A549 (cell line): ENCODE measurements at regions of chr12 and their contacts with region 1.

Region 1: DNA sequence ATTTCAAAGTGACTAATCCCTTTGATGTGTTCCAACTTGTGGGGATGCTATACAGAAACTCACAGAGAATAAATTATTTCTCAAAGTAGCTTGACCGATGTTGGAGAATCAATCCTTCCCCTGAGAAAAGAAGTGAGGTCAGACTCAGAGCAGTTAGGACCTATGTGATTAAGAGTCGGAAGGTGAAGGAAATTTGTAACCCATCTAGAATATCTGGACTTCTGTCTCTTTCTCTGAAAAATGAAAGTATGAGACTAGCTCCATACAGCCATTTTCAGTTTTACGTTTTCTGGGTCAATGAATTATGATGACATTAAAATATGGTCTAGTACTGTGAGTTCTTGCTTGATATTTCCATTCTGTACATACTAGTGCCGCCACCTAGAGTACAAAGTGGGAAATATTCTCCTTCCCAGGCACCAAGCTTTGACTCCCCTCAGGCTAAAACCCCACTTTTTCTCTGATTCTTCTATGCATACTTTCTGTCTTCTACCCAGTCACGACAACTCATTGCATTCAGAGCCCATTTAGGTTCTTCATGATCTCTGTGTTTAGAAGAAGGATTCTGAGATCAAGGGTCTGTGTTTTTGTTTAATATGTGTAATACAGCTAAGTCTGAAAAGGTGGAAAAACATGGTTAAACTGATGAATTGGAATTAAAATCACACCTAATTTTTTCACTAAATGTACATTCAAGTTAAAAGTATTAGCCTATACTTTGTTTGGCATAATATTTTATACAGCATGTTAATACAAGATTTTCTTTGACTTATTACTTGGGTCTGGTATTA is 6.9 kb upstream of the NTS start:
- DNase-seq: peak; percentile 51 to 70
- ATAC-seq: peak; percentile 64 to 95; a peak in 5 of 6 replicates
- H3K4me3 ChIP-seq: no peak overlapping the region
- H3K27ac ChIP-seq: peak overlapping the region in 1 of 2 experiments; percentile 18; a peak in 1 of 6 replicates
- H3K4me1 ChIP-seq: no peaks in the 10 kb centered on the region
- CTCF ChIP-seq: peak; percentile 82
- EP300 ChIP-seq: no peak
- POLR2A ChIP-seq: no peak
- RAD21 ChIP-seq: peak; percentile 82 to 87

Region 2: DNA sequence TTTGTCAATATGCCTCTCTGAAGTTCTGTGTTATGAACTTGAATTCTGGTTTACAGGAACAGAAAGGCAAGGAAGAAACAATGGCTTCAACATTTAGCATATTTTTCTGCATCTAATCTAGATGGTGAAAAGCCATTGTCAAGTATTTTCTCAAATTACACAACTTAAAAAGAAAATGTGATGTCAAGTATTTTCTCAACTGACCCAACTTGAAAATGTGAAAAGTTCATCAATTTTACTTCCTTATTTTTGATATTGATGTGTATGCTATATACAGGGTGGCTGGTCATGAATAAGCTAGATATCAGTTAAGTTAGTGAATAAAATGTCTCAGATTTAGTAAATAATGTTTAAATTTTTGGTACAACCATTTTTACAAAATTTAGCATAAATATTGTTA is 390.4 kb before region 1 on chr12:
- CTCF ChIA-PET with region 1: interaction called, 16 read pairs
- POLR2A ChIA-PET with region 1: no interaction called
- DNase-seq: no peak
- ATAC-seq: no peak
- H3K4me3 ChIP-seq: no peak overlapping the region
- H3K27ac ChIP-seq: no peak overlapping the region
- H3K4me1 ChIP-seq: no peaks in the 10 kb centered on the region
- CTCF ChIP-seq: no peak
- EP300 ChIP-seq: no peak
- POLR2A ChIP-seq: no peak
- RAD21 ChIP-seq: no peak

Region 3: GRCh38 chr12:85568395-85569103 is 298.6 kb before region 1 on chr12:
- CTCF ChIA-PET with region 1: interaction called, 18 read pairs
- POLR2A ChIA-PET with region 1: no interaction called
- DNase-seq: no peak
- ATAC-seq: no peak
- H3K4me3 ChIP-seq: no peak overlapping the region
- H3K27ac ChIP-seq: no peak overlapping the region
- H3K4me1 ChIP-seq: no peaks in the 10 kb centered on the region
- CTCF ChIP-seq: no peak
- EP300 ChIP-seq: no peak
- POLR2A ChIP-seq: no peak
- RAD21 ChIP-seq: no peak

Region 4: DNA sequence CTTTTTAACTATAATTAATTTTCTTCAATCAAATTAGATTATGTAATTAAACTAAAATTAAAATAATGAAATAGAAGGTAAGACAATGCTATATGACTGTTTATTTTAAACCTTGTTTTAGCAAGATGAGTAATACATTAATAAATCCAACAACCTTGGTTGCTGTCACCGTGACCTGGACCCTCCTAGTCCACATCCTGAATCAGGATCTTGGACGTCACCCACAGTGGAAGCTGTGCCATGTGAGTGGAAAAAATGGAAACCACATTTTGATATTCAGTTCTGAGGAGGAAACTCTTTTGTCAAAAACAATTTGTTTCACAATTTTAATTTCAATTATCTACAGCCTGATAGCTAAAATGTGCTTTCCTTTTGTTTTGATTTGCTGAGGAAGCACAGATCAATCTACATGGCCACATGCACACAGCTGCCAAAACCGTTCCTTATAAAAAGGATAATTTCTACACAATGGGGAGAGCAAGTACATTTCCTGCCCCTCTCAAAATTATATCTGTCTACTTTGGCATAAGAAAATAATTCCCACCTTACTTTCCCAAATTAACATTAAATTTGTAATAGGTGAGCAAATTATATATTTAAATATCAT is 286.5 kb before region 1 on chr12:
- CTCF ChIA-PET with region 1: interaction called, 85 read pairs
- POLR2A ChIA-PET with region 1: no interaction called
- DNase-seq: no peak
- ATAC-seq: no peak
- H3K4me3 ChIP-seq: no peak overlapping the region
- H3K27ac ChIP-seq: no peak overlapping the region
- H3K4me1 ChIP-seq: no peaks in the 10 kb centered on the region
- CTCF ChIP-seq: no peak
- EP300 ChIP-seq: no peak
- POLR2A ChIP-seq: no peak
- RAD21 ChIP-seq: no peak

Region 5: GRCh38 chr12:85855305-85855704 is 11.9 kb before region 1 on chr12:
- CTCF ChIA-PET with region 1: interaction called, 36 read pairs
- POLR2A ChIA-PET with region 1: no interaction called
- DNase-seq: no peak
- ATAC-seq: no peak; a peak in 1 of 6 replicates
- H3K4me3 ChIP-seq: no peak overlapping the region
- H3K27ac ChIP-seq: no peak overlapping the region
- H3K4me1 ChIP-seq: no peaks in the 10 kb centered on the region
- CTCF ChIP-seq: no peak
- EP300 ChIP-seq: no peak
- POLR2A ChIP-seq: no peak
- RAD21 ChIP-seq: no peak

Region 6: GRCh38 chr12:85949253-85949652 is 82.1 kb after region 1 on chr12:
- CTCF ChIA-PET with region 1: no interaction called
- POLR2A ChIA-PET with region 1: no interaction called
- DNase-seq: no peak
- ATAC-seq: no peak
- H3K4me3 ChIP-seq: no peak overlapping the region
- H3K27ac ChIP-seq: no peak overlapping the region
- H3K4me1 ChIP-seq: no peaks in the 10 kb centered on the region
- CTCF ChIP-seq: no peak
- EP300 ChIP-seq: no peak
- POLR2A ChIP-seq: no peak
- RAD21 ChIP-seq: no peak